CD8-positive, alpha-beta T cell (primary cell): ENCODE measurements at regions of chr6 and their contacts with region 1.

Region 1: DNA sequence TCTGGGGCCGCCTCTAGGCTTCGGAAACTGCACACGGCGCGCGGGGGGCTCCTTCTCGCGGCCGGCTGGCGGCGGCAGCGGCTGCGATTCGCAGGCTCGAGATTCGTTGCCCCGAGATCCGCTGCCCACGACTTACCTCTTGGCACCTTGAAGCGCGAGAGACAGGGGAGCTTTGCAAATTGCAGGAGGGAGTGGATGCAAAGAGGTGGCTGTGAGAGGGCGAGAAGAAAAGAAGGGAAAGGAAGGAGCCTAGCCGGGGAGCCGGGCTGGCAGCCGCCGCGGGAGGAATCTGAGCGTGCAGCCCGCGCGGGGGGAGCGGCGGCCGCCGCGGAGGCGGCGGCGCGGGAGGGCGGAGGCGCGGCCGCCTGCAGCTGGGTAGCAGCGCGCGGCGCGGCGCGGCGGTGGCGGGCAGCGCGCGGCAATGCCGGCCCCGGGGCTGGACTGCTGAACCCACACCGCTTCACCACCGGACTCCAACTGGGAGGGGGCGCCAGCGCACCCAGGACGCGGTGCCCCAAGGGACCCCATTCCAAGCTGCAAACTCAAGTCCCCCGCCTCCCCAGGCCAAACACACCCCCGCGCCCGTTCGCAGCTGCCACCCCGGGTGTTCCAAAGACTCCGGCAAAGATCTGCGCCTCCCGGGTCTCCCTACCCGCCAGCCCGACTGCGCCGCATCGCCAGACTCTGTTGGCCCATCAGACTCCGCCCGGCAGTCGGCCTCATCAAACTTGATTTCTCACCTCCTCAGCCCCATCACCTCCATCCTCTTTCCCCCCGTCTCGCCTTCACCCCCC is 44.2 kb upstream of the SUPT3H start:
- DNase-seq: peak; percentile 8 to 76 (median 56)
- ATAC-seq: peak; percentile 35
- H3K4me3 ChIP-seq: peak overlapping the region; percentile 64 to 76
- H3K4me3 Mint-ChIP-seq: peak overlapping the region; percentile 94
- H3K27ac ChIP-seq: peak overlapping the region in 1 of 2 experiments; percentile 62
- H3K27ac Mint-ChIP-seq: peak overlapping the region; percentile 92
- H3K4me1 ChIP-seq: peaks cover 21% of the 10 kb centered on the region
- H3K4me1 Mint-ChIP-seq: peaks cover 45% of the 10 kb centered on the region
- H3K27me3 ChIP-seq: peaks cover 0 to 13% of the 10 kb centered on the region in 2 experiments
- H3K27me3 Mint-ChIP-seq: peaks cover 2% of the 10 kb centered on the region
- CTCF ChIP-seq: no peak

Region 2: GRCh38 chr6:44593539-44593944 is 828.4 kb before region 1 on chr6:
- CTCF ChIA-PET with region 1: no interaction called
- POLR2A ChIA-PET with region 1: no interaction called
- intact Hi-C with region 1: loop called in 1 of 2 experiments (anchors 5 kb)
- DNase-seq: peak; percentile 25 to 73 (median 65)
- ATAC-seq: peak; percentile 56
- H3K4me3 ChIP-seq: no peak overlapping the region
- H3K4me3 Mint-ChIP-seq: no peak overlapping the region
- H3K27ac ChIP-seq: no peak overlapping the region
- H3K27ac Mint-ChIP-seq: no peak overlapping the region
- H3K4me1 ChIP-seq: no peaks in the 10 kb centered on the region
- H3K4me1 Mint-ChIP-seq: peaks cover 2% of the 10 kb centered on the region
- H3K27me3 ChIP-seq: no peaks in the 10 kb centered on the region
- H3K27me3 Mint-ChIP-seq: peaks cover 7% of the 10 kb centered on the region
- CTCF ChIP-seq: peak; percentile 59

Region 3: GRCh38 chr6:44855562-44856411 is 566.1 kb before region 1 on chr6:
- CTCF ChIA-PET with region 1: no interaction called
- POLR2A ChIA-PET with region 1: no interaction called
- intact Hi-C with region 1: loop called (anchors 5 to 10 kb)
- DNase-seq: no peak
- ATAC-seq: no peak
- H3K4me3 ChIP-seq: no peak overlapping the region
- H3K4me3 Mint-ChIP-seq: no peak overlapping the region
- H3K27ac ChIP-seq: no peak overlapping the region
- H3K27ac Mint-ChIP-seq: no peak overlapping the region
- H3K4me1 ChIP-seq: peaks cover 32% of the 10 kb centered on the region
- H3K4me1 Mint-ChIP-seq: peaks cover 54% of the 10 kb centered on the region
- H3K27me3 ChIP-seq: no peaks in the 10 kb centered on the region
- H3K27me3 Mint-ChIP-seq: no peaks in the 10 kb centered on the region
- CTCF ChIP-seq: no peak

Region 4: DNA sequence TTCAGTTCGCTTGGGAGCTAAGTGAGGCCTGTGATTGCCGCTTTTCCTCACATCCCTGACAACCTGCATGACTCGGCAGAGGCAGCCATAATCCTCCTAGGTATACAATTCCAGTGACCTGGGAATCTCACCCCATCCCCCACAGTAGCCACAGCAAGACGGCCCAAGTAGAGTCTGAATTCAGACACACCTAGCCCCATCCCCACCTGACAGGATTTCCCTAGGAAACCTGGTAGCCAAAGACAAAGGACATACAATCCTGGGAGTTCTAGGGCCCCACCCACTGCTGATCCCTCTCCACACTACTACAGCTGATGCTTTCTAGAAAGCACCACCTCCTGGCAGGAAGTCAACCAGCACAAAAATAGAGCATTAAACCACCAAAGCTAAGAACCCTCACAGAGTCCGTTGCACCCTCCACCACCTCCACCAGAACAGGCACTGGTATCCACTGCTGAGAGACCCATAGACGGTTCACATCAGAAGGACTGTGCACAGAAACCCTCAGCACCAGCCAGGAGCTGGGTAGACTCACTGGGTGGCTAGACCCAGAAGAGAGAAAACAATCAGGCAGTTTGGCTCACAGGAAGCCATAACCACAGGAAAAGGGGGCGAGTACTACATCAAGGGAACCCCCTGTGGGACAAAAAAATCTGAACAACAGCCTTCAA is 111.7 kb before region 1 on chr6:
- CTCF ChIA-PET with region 1: no interaction called
- POLR2A ChIA-PET with region 1: no interaction called
- intact Hi-C with region 1: loop called in 1 of 2 experiments (anchors 5 kb)
- DNase-seq: peak; percentile 2 to 80 (median 51)
- ATAC-seq: peak; percentile 87
- H3K4me3 ChIP-seq: peak overlapping the region; percentile 14 to 28
- H3K4me3 Mint-ChIP-seq: peak overlapping the region; percentile 64
- H3K27ac ChIP-seq: peak overlapping the region; percentile 29 to 45
- H3K27ac Mint-ChIP-seq: peak overlapping the region; percentile 95
- H3K4me1 ChIP-seq: peaks cover 35% of the 10 kb centered on the region
- H3K4me1 Mint-ChIP-seq: peaks cover 65% of the 10 kb centered on the region
- H3K27me3 ChIP-seq: no peaks in the 10 kb centered on the region
- H3K27me3 Mint-ChIP-seq: no peaks in the 10 kb centered on the region
- CTCF ChIP-seq: no peak

Region 5: DNA sequence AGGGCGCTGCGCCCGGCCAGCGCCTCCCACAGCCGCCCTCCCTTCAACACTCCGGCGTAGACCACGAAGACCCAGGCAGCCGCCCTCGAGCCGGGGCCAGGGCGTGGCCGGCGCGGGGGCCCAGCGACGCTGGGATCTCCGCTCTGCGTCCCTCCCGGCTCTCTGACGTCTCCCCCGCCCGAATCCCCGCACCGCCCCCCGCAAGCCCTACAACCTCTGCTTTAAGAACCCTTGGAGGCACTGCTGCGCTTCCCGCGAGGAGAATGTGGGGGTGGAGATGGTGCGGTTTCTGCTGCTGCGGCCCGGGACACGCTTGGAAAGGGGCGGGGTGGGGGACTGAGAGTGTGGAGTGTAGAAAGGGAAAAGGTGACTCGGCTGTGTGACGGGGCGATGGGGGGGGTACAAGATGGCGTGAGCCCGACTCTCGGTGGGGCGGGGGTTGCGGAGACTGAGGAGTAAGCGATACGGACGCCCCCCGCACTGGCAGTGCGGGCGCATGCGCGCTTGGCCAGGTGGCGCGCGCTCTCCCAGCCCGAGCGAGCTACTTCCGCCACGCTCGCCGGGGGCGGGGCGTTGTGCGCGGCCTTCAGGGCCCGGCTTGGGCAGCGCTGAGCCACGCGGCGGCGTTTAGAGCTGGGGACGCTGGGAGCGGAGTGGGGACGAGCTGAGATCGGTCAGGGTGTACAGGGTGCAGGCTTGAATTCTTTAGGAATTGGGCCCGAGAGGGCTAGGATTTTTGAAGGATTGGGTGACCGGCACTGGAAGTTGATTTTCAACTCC is 44.2 kb before region 1 on chr6 and contains the start of gene SUPT3H:
- CTCF ChIA-PET with region 1: interaction called, 4 read pairs
- POLR2A ChIA-PET with region 1: interaction called, 22 read pairs
- intact Hi-C with region 1: loop called (anchors 1 kb)
- DNase-seq: peak; percentile 79 to 98 (median 91)
- ATAC-seq: peak; percentile 79
- H3K4me3 ChIP-seq: peak within 1 kb of the TSS; percentile 73 to 90
- H3K4me3 Mint-ChIP-seq: peak within 1 kb of the TSS; percentile 96
- H3K27ac ChIP-seq: peak within 1 kb of the TSS; percentile 83 to 95
- H3K27ac Mint-ChIP-seq: peak within 1 kb of the TSS; percentile 99
- H3K4me1 ChIP-seq: peaks cover 8% of the 10 kb centered on the region
- H3K4me1 Mint-ChIP-seq: peaks cover 29% of the 10 kb centered on the region
- H3K27me3 ChIP-seq: no peaks in the 10 kb centered on the region
- H3K27me3 Mint-ChIP-seq: no peaks in the 10 kb centered on the region
- CTCF ChIP-seq: no peak
- total RNA-seq, gene SUPT3H: 9.4 to 10.7 TPM

Region 6: GRCh38 chr6:45388328-45388727 is 33.6 kb before region 1 on chr6:
- CTCF ChIA-PET with region 1: no interaction called
- POLR2A ChIA-PET with region 1: no interaction called
- intact Hi-C with region 1: no loop called
- DNase-seq: no peak
- ATAC-seq: no peak
- H3K4me3 ChIP-seq: no peak overlapping the region
- H3K4me3 Mint-ChIP-seq: no peak overlapping the region
- H3K27ac ChIP-seq: no peak overlapping the region
- H3K27ac Mint-ChIP-seq: no peak overlapping the region
- H3K4me1 ChIP-seq: no peaks in the 10 kb centered on the region
- H3K4me1 Mint-ChIP-seq: peaks cover 6% of the 10 kb centered on the region
- H3K27me3 ChIP-seq: no peaks in the 10 kb centered on the region
- H3K27me3 Mint-ChIP-seq: no peaks in the 10 kb centered on the region
- CTCF ChIP-seq: no peak

Region 7: DNA sequence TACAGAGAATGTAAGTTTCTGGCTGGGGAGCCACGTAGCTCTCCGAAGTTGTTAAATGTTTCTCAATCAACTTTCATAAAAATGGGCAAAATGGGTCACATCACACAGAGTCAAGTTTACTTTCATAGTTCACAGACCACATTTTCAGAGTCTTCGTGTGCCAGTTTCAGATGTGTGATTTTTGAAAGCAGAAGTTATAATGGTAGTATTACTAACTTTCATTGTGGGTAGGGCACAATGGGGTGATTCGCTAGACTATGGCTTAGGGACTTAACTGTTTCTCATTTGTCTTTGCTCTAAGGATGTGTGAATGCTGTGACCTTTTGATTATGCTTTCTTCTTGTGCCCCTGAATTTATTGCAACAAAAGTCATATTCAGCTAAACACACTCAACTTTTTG is 64.8 kb after region 1 on chr6:
- CTCF ChIA-PET with region 1: no interaction called
- POLR2A ChIA-PET with region 1: no interaction called
- intact Hi-C with region 1: loop called (anchors 2 to 5 kb)
- DNase-seq: peak in 1 of 9 experiments; percentile 9
- ATAC-seq: peak; percentile 45
- H3K4me3 ChIP-seq: no peak overlapping the region
- H3K4me3 Mint-ChIP-seq: no peak overlapping the region
- H3K27ac ChIP-seq: no peak overlapping the region
- H3K27ac Mint-ChIP-seq: peak overlapping the region; percentile 16
- H3K4me1 ChIP-seq: peaks cover 27% of the 10 kb centered on the region
- H3K4me1 Mint-ChIP-seq: peaks cover 39% of the 10 kb centered on the region
- H3K27me3 ChIP-seq: no peaks in the 10 kb centered on the region
- H3K27me3 Mint-ChIP-seq: no peaks in the 10 kb centered on the region
- CTCF ChIP-seq: no peak